GM10248 (cell line): ENCODE measurements at regions of chr1 and their contacts with region 1.

Region 1: DNA sequence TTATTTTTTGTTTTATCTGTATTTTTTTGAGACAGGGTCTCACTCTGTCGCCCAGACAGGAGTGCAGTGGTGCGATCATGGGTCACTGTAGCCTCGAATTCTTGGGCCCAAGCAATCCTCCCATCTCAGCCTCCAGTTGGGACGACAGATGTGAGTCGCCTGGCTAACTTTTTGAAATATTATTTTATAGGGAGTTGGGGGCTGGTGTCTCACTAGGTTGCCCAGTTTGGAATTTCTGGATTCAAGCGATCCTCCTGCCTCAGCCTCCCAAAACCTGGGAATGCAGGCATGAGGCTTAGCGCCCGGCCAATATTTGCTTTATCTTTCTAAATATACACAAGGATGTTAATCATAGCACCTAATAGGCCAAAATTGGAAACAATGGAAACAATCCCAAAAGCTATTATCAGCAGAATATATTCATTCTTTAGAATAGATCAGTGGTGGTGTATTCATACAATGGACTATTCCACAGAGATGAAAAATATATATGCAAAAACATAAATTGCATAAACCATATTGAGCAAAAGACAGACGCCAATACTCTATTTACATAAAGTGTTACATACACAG is 55.9 kb downstream of the DAP3 start:
- DNase-seq: no peak
- CTCF ChIP-seq: no peak

Region 2: DNA sequence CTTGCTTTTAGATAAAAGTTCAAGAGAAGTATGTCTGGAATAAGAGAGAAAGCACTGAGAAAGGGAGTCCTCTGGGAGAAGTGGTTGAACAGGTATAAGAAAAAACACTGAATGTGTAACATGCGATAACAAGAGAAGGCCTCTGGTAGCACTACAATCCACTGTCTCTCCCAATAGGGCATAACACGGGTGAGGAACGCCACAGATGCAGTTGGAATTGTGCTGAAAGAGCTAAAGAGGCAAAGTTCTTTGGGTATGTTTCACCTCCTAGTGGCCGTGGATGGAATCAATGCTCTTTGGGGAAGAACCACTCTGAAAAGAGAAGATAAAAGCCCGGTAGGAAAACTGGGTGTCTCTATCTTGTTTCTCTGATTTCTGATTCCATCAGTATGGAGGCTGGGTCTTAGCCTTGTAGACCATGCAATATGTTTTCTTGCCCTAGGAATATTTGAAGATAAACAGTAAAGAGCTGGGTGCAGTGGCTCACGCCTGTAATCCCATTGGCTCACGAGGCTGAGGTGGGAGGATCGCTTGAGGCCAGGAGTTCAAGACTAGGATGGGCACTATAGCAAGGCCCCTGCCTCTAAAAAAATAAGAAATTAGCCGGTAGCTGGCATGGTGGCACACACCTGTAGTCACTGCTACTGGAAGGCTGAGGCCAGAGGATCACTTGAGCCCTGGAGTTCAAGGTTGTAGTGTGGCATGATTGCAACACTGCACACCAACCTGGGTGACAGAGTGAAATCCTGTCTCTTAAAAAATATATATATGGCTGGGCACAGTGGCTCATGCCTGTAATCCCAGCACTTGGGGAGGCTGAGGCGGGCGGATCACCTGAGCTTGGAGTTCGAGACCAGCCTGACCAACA is 15.5 kb before region 1 on chr1:
- CTCF ChIA-PET with region 1: interaction called, 12 read pairs
- POLR2A ChIA-PET with region 1: interaction called, 3 read pairs
- DNase-seq: peak; percentile 28
- CTCF ChIP-seq: peak; percentile 52

Region 3: GRCh38 chr1:155759966-155760630 is 15.3 kb after region 1 on chr1:
- CTCF ChIA-PET with region 1: no interaction called
- POLR2A ChIA-PET with region 1: no interaction called
- DNase-seq: no peak
- CTCF ChIP-seq: no peak

Region 4: GRCh38 chr1:155911156-155912055 is 166.6 kb after region 1 on chr1 and contains the start of gene RIT1:
- CTCF ChIA-PET with region 1: no interaction called
- POLR2A ChIA-PET with region 1: no interaction called
- DNase-seq: peak; percentile 93
- CTCF ChIP-seq: no peak